Activated CD8-positive, alpha-beta T cell treated with anti-CD3 and anti-CD28 coated beads, Interleukin-2, amount 10 ng/mL, durations not matched to agents 7 days and 5 days (primary cell): ENCODE measurements at regions of chr1 and their contacts with region 1.

Region 1: DNA sequence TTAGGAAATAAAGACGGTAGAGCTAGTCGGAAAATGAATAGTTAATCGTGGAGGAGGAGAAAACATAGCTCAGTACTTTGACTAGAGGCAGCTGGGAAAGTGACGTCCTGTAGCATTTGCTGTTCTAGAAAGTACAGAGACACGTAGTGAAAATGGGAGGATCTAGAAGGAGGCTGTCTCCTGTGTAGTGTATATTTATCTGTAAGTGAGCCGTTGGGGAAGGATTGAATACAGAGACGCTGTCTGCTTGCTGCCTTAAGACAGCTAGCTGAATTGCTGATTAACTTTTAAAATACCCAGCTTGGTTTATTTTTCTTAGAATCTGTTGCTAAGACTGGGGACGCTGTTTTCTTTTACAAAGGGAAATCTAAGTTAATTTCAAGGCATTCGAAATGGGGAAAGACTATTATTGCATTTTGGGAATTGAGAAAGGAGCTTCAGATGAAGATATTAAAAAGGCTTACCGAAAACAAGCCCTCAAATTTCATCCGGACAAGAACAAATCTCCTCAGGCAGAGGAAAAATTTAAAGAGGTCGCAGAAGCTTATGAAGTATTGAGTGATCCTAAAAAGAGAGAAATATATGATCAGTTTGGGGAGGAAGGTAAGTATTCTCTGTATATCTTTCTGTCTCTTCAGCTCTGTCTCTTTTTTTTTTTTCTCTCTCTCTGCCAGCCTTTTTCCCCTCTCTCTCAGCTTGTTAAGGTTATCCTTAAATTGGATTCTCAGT is at the start of gene DNAJB4:
- DNase-seq: peak; percentile 86
- ATAC-seq: peak; percentile 98
- H3K4me3 Mint-ChIP-seq: peak within 1 kb of the TSS; percentile 93
- H3K27ac Mint-ChIP-seq: peak within 1 kb of the TSS; percentile 94
- H3K4me1 Mint-ChIP-seq: peaks cover 35% of the 10 kb centered on the region
- H3K27me3 Mint-ChIP-seq: no peaks in the 10 kb centered on the region
- total RNA-seq, gene DNAJB4: 9.4 to 10.5 TPM

Region 2: GRCh38 chr1:77779529-77780281 is 225.2 kb before region 1 on chr1 and contains the start of gene MIGA1:
- CTCF ChIA-PET with region 1: no interaction called
- POLR2A ChIA-PET with region 1: interaction called, 12 read pairs
- DNase-seq: peak; percentile 92
- ATAC-seq: peak; percentile 98
- H3K4me3 Mint-ChIP-seq: peak within 1 kb of the TSS; percentile 89
- H3K27ac Mint-ChIP-seq: peak within 1 kb of the TSS; percentile 78
- H3K4me1 Mint-ChIP-seq: peaks cover 34% of the 10 kb centered on the region
- H3K27me3 Mint-ChIP-seq: no peaks in the 10 kb centered on the region
- total RNA-seq, gene MIGA1: 9.9 to 10.7 TPM

Region 3: DNA sequence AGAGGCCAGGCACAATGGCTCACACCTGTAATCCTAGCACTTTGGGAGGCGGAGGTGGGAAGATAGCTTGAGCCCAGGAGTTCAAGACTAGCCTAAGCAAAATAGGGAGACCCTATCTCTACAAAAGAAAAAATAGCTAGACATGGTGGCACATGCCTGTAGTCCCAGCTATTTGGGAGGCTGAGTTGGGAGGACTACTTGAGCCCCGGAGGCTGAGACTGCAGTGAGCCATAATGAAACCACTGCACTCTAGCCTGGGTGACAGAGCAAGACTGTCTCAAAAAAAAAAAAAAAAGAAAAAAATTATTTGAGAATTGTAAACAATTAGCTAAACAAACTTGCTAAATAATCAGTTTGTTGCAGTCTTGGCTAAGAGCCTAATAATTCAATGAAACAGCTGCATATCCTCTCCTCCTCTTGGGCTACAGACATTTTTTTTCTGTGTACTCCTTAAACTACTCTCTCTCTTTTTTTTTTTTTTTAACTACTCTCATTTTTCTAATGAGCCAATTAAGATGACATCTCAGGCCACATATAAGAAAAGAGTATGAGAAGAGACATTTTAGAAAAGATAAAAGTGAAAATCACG is 10.7 kb before region 1 on chr1:
- CTCF ChIA-PET with region 1: interaction called, 7 read pairs
- POLR2A ChIA-PET with region 1: interaction called, 29 read pairs
- DNase-seq: no peak
- ATAC-seq: no peak
- H3K4me3 Mint-ChIP-seq: no peak overlapping the region
- H3K27ac Mint-ChIP-seq: no peak overlapping the region
- H3K4me1 Mint-ChIP-seq: peaks cover 7% of the 10 kb centered on the region
- H3K27me3 Mint-ChIP-seq: no peaks in the 10 kb centered on the region

Region 4: DNA sequence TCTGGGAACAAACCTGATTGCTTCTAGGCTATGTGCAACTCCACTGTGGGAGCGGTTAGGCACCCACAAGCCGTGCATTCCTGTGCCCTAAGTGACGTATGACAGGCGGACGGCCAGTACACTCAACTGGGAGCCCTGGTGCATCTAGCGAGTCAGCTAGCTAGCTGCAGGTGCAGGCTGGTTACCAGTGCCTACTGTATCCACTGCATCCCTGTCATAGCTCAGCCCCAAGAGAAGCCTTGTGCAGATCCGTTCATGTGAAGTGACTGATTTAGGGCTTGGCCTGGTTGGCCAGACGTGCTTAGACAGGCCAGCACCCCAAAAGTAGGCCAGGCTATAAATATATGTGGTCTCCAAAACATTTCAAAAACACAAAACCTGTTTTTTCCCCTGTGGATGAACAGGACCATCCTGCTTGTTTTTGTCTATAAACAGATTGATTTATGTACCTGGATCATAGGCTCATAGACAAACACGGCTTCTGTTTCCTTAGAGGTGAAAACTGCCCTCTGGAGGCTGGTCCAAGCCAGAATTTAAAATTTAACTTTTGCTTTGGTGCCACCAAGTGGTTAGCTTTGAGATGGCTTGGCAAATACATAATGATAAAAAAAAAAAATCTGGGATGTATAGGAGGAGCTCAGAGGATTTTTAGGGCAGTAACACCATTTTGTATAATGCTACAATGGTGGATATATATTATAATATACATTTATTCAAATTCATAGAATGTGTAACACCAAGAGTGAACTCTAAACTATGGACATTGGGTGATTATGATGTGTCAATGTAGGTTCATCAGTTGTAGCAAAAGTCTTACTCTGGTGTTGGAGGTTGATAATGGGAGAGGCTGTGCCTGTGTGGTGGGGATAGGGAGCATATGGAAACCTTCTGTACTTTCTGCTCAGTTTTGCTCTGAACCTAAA is 109.4 kb after region 1 on chr1:
- CTCF ChIA-PET with region 1: interaction called, 30 read pairs
- POLR2A ChIA-PET with region 1: interaction called, 6 read pairs
- DNase-seq: peak; percentile 74
- ATAC-seq: peak; percentile 89
- H3K4me3 Mint-ChIP-seq: no peak overlapping the region
- H3K27ac Mint-ChIP-seq: no peak overlapping the region
- H3K4me1 Mint-ChIP-seq: peaks cover 2% of the 10 kb centered on the region
- H3K27me3 Mint-ChIP-seq: peaks cover 2% of the 10 kb centered on the region

Region 5: DNA sequence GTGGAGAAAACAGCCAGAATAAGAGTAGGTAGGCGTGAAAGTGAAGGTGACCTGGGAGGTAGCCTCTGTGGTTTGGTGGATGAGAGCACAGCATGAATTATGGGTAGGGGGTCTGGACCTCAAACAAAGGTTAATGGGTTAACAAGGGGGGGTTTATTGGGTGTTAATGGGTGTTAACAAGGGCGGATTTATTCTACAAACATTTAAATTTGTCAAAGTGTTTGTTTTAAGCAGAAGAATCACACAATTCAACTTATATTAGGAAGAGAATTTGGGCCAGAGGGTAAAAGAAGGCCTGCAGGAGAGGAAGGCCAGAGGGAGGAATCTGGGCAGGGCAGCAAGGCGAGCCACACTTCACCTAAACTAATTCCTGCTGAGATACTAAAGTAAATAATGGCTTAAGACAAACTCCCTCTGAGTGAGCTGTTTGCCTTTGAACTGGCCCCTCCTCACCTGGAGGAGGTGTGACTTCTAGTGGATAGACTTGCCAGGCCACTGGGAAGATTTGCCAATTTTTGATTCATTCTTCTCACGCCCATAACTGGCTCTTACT is 232.6 kb after region 1 on chr1:
- CTCF ChIA-PET with region 1: no interaction called
- POLR2A ChIA-PET with region 1: no interaction called
- DNase-seq: no peak
- ATAC-seq: no peak
- H3K4me3 Mint-ChIP-seq: no peak overlapping the region
- H3K27ac Mint-ChIP-seq: no peak overlapping the region
- H3K4me1 Mint-ChIP-seq: no peaks in the 10 kb centered on the region
- H3K27me3 Mint-ChIP-seq: no peaks in the 10 kb centered on the region

Region 6: GRCh38 chr1:78617615-78618026 is 612.7 kb after region 1 on chr1:
- CTCF ChIA-PET with region 1: interaction called, 5 read pairs
- POLR2A ChIA-PET with region 1: interaction called, 17 read pairs
- DNase-seq: peak; percentile 78
- ATAC-seq: peak; percentile 55
- H3K4me3 Mint-ChIP-seq: peak overlapping the region; percentile 42
- H3K27ac Mint-ChIP-seq: no peak overlapping the region
- H3K4me1 Mint-ChIP-seq: peaks cover 40% of the 10 kb centered on the region
- H3K27me3 Mint-ChIP-seq: peaks cover 14% of the 10 kb centered on the region